ENCODE measurements at regions of chr16 and their contacts with region 1.

Region 1: DNA sequence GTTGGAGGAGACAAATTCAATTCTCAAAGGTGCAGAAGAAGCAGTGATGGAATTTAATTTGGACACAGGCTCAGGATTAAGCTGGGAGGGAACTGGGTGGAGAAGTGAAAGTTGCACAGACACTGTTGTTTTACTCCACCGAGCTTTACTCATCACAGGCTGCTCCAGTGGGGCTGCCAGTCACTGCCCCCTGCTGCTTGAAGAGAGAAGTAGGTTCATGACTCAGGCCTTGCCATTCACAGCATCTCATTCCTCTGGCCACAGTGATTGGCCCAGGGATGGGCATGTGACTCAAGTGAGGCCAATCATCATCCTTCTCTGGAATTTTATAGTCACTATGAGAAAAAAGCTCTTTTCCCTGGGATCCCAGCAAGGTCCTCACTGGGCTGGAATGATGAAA is 11.8 kb downstream of the GNAO1 start:
- DNase-seq: peak in 2 of 9 donors; percentile 39 to 41
- ATAC-seq: peak; percentile 90
- H3K4me3 ChIP-seq: no peak overlapping the region
- H3K4me3 Mint-ChIP-seq: no peak overlapping the region
- H3K27ac ChIP-seq: no peak overlapping the region
- H3K27ac Mint-ChIP-seq: no peak overlapping the region
- H3K4me1 ChIP-seq: peaks cover 30 to 54% of the 10 kb centered on the region in 2 donors
- H3K4me1 Mint-ChIP-seq: peaks cover 0 to 19% (median 14%) of the 10 kb centered on the region in 7 donors
- H3K27me3 ChIP-seq: no peaks in the 10 kb centered on the region
- H3K27me3 Mint-ChIP-seq: peaks cover 0 to 26% (median 0%) of the 10 kb centered on the region in 5 donors

Region 2: DNA sequence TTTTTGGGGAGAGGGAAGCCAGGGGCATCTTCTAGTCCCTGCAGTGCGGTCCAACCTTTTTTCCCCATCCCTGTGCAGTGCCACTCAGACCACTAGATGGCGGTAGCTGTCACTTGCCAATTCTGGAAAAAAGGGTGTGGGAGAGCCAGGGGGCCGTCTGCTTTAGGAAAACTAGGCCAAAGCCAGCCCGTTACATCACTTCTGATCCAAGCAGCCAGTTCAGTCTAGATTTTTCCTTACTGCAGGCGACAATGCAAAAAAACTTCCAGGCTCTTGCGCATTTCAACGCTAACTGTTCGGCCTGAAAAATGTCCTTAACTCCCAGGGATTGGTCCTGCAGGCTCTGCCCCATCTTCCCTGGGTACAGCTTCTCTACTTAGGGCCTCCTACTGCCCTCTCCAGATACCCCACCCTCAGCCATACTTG is 258.7 kb before region 1 on chr16:
- CTCF ChIA-PET with region 1: interaction called, 5 read pairs
- POLR2A ChIA-PET with region 1: no interaction called
- intact Hi-C with region 1: loop called in 1 of 2 experiments (anchors 1 kb)
- DNase-seq: peak in 6 of 9 donors; percentile 11 to 49 (median 24)
- ATAC-seq: peak; percentile 66
- H3K4me3 ChIP-seq: no peak overlapping the region
- H3K4me3 Mint-ChIP-seq: no peak overlapping the region
- H3K27ac ChIP-seq: no peak overlapping the region
- H3K27ac Mint-ChIP-seq: no peak overlapping the region
- H3K4me1 ChIP-seq: no peaks in the 10 kb centered on the region
- H3K4me1 Mint-ChIP-seq: peaks cover 0 to 3% (median 0%) of the 10 kb centered on the region in 7 donors
- H3K27me3 ChIP-seq: no peaks in the 10 kb centered on the region
- H3K27me3 Mint-ChIP-seq: peaks cover 42 to 53% (median 47%) of the 10 kb centered on the region in 5 donors

Region 3: DNA sequence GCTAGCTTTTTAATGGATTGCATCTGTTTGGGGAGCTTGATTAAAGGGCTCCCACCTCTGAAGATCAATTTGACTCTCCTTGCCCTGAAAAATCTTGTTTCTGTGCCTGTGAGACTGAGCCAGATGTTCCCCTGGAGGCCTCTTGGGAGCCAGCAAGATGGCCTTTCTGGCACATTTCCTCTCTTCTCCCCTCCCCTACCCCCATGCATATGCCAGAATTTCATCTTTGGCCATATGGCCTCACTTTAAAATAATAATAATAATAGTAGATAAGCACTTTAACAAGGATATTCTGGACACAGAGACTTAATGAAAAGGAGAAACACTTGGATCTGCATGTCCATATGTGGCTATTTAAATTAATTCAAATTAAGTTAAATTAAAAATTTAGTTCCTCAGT is 183.8 kb before region 1 on chr16:
- CTCF ChIA-PET with region 1: no interaction called
- POLR2A ChIA-PET with region 1: no interaction called
- intact Hi-C with region 1: no loop called
- DNase-seq: no peak
- ATAC-seq: no peak
- H3K4me3 ChIP-seq: no peak overlapping the region
- H3K4me3 Mint-ChIP-seq: no peak overlapping the region
- H3K27ac ChIP-seq: no peak overlapping the region
- H3K27ac Mint-ChIP-seq: no peak overlapping the region
- H3K4me1 ChIP-seq: no peaks in the 10 kb centered on the region
- H3K4me1 Mint-ChIP-seq: no peaks in the 10 kb centered on the region
- H3K27me3 ChIP-seq: no peaks in the 10 kb centered on the region
- H3K27me3 Mint-ChIP-seq: peaks cover 0 to 25% (median 13%) of the 10 kb centered on the region in 5 donors

Region 4: GRCh38 chr16:56041686-56042085 is 161.4 kb before region 1 on chr16:
- CTCF ChIA-PET with region 1: interaction called, 3 read pairs
- POLR2A ChIA-PET with region 1: no interaction called
- intact Hi-C with region 1: loop called (anchors 1 to 2 kb)
- DNase-seq: peak in 1 of 9 donors; percentile 3
- ATAC-seq: peak; percentile 61
- H3K4me3 ChIP-seq: no peak overlapping the region
- H3K4me3 Mint-ChIP-seq: no peak overlapping the region
- H3K27ac ChIP-seq: no peak overlapping the region
- H3K27ac Mint-ChIP-seq: no peak overlapping the region
- H3K4me1 ChIP-seq: no peaks in the 10 kb centered on the region
- H3K4me1 Mint-ChIP-seq: no peaks in the 10 kb centered on the region
- H3K27me3 ChIP-seq: no peaks in the 10 kb centered on the region
- H3K27me3 Mint-ChIP-seq: peaks cover 13 to 45% (median 28%) of the 10 kb centered on the region in 5 donors

Region 5: DNA sequence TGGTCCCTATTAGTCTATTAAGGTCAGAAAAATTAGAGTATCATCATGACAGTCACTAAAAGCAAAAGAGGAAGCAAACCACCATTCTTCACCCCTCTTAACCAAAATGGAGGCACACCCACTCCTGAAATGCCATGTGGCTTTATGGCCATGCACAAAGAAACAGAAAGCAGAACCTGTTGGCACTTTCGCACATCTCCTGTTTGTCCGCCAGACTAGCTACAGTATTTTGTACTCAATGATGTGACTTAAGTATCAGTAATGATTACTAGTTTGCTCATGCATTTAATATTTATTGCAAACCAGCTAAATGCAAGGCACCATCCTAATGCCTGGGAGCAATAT is 81.9 kb before region 1 on chr16:
- CTCF ChIA-PET with region 1: no interaction called
- POLR2A ChIA-PET with region 1: no interaction called
- intact Hi-C with region 1: no loop called
- DNase-seq: no peak
- ATAC-seq: no peak
- H3K4me3 ChIP-seq: no peak overlapping the region
- H3K4me3 Mint-ChIP-seq: no peak overlapping the region
- H3K27ac ChIP-seq: no peak overlapping the region
- H3K27ac Mint-ChIP-seq: no peak overlapping the region
- H3K4me1 ChIP-seq: no peaks in the 10 kb centered on the region
- H3K4me1 Mint-ChIP-seq: peaks cover 0 to 5% (median 0%) of the 10 kb centered on the region in 7 donors
- H3K27me3 ChIP-seq: no peaks in the 10 kb centered on the region
- H3K27me3 Mint-ChIP-seq: peaks cover 13 to 44% (median 20%) of the 10 kb centered on the region in 5 donors

Region 6: DNA sequence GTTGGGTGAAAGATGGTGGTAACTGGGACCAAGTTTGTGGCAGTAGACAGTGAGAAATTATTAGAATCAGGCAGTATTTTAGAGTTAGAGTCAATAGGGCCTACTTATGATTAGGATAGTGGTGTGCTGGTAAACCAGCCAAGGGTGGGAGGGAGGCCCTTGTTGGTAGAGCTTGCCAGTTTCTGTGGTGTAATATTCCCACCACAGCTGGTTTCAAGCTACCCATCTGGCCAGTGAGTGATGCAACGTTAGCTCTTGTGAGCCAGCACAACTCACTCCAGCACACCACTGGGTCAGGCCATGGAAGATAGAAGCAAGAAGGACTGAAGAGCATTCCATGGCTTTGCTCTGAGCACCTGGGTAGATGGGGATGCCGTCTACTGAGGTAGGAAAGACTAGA is 23.1 kb after region 1 on chr16:
- CTCF ChIA-PET with region 1: no interaction called
- POLR2A ChIA-PET with region 1: no interaction called
- intact Hi-C with region 1: loop called in 1 of 2 experiments (anchors 2 kb)
- DNase-seq: no peak
- ATAC-seq: no peak
- H3K4me3 ChIP-seq: no peak overlapping the region
- H3K4me3 Mint-ChIP-seq: peak overlapping the region in 2 of 10 donors; percentile 5 to 56
- H3K27ac ChIP-seq: no peak overlapping the region
- H3K27ac Mint-ChIP-seq: peak overlapping the region in 1 of 9 donors; percentile 13
- H3K4me1 ChIP-seq: peaks cover 5 to 34% of the 10 kb centered on the region in 2 donors
- H3K4me1 Mint-ChIP-seq: peaks cover 24 to 36% (median 28%) of the 10 kb centered on the region in 7 donors
- H3K27me3 ChIP-seq: no peaks in the 10 kb centered on the region
- H3K27me3 Mint-ChIP-seq: peaks cover 0 to 44% (median 0%) of the 10 kb centered on the region in 5 donors

Region 7: GRCh38 chr16:56262148-56262547 is 59.1 kb after region 1 on chr16:
- CTCF ChIA-PET with region 1: no interaction called
- POLR2A ChIA-PET with region 1: no interaction called
- intact Hi-C with region 1: loop called in 1 of 2 experiments (anchors 5 kb)
- DNase-seq: peak in 4 of 9 donors; percentile 3 to 26 (median 10)
- ATAC-seq: peak; percentile 81
- H3K4me3 ChIP-seq: peak overlapping the region; percentile 31
- H3K4me3 Mint-ChIP-seq: peak overlapping the region in 9 of 10 donors; percentile 5 to 81 (median 48)
- H3K27ac ChIP-seq: no peak overlapping the region
- H3K27ac Mint-ChIP-seq: peak overlapping the region in 7 of 9 donors; percentile 3 to 81 (median 21)
- H3K4me1 ChIP-seq: peaks cover 8 to 37% of the 10 kb centered on the region in 2 donors
- H3K4me1 Mint-ChIP-seq: peaks cover 15 to 38% (median 23%) of the 10 kb centered on the region in 7 donors
- H3K27me3 ChIP-seq: no peaks in the 10 kb centered on the region
- H3K27me3 Mint-ChIP-seq: peaks cover 0 to 5% (median 0%) of the 10 kb centered on the region in 5 donors

Region 8: GRCh38 chr16:56281256-56281805 is 78.3 kb after region 1 on chr16:
- CTCF ChIA-PET with region 1: no interaction called
- POLR2A ChIA-PET with region 1: no interaction called
- intact Hi-C with region 1: loop called in 1 of 2 experiments (anchors 5 kb)
- DNase-seq: no peak
- ATAC-seq: no peak
- H3K4me3 ChIP-seq: no peak overlapping the region
- H3K4me3 Mint-ChIP-seq: no peak overlapping the region
- H3K27ac ChIP-seq: no peak overlapping the region
- H3K27ac Mint-ChIP-seq: peak overlapping the region in 1 of 9 donors; percentile 62
- H3K4me1 ChIP-seq: peaks cover 0 to 29% of the 10 kb centered on the region in 2 donors
- H3K4me1 Mint-ChIP-seq: peaks cover 7 to 30% (median 13%) of the 10 kb centered on the region in 7 donors
- H3K27me3 ChIP-seq: no peaks in the 10 kb centered on the region
- H3K27me3 Mint-ChIP-seq: peaks cover 0 to 3% (median 0%) of the 10 kb centered on the region in 5 donors

Region 9: GRCh38 chr16:56317998-56318826 is 115.2 kb after region 1 on chr16:
- CTCF ChIA-PET with region 1: no interaction called
- POLR2A ChIA-PET with region 1: no interaction called
- intact Hi-C with region 1: loop called in 1 of 2 experiments (anchors 1 kb)
- DNase-seq: peak; percentile 42 to 82 (median 67)
- ATAC-seq: peak; percentile 95
- H3K4me3 ChIP-seq: peak overlapping the region; percentile 47
- H3K4me3 Mint-ChIP-seq: peak overlapping the region; percentile 29 to 72 (median 56)
- H3K27ac ChIP-seq: no peak overlapping the region
- H3K27ac Mint-ChIP-seq: peak overlapping the region in 1 of 9 donors; percentile 66
- H3K4me1 ChIP-seq: peaks cover 0 to 7% of the 10 kb centered on the region in 2 donors
- H3K4me1 Mint-ChIP-seq: peaks cover 0 to 14% (median 0%) of the 10 kb centered on the region in 7 donors
- H3K27me3 ChIP-seq: no peaks in the 10 kb centered on the region
- H3K27me3 Mint-ChIP-seq: peaks cover 0 to 9% (median 4%) of the 10 kb centered on the region in 5 donors

Measured in naive thymus-derived CD4-positive, alpha-beta T cell (primary cell).